ENCODE measurements at regions of chr5 and their contacts with region 1.

Region 1: DNA sequence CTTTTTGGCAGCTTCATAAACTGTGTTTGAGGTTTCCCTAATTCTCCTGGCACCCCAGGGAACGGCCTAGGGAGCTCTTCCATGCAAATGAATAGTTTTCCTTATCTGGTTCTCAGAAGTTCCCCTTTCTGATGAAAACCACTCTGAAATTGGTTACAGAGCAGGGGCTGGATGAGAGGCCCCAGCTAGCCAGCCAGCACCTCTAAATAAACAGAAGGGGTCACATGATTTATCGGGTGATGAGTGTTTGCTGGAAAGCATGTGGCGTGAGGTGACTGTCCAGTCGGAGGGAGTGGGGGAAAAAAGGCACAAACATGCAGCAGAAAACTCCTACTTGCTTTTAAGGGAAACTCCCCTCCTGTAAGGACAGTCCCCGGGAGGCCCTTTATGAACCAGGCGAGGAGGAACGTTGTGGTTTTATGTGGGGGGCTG is 261.2 kb upstream of the ANKRD55 start:
- DNase-seq: no peak
- ATAC-seq: no peak
- H3K4me3 ChIP-seq: no peak overlapping the region
- H3K27ac ChIP-seq: no peak overlapping the region
- H3K4me1 ChIP-seq: no peaks in the 10 kb centered on the region
- CTCF ChIP-seq: no peak
- EP300 ChIP-seq: no peak
- POLR2A ChIP-seq: no peak
- RAD21 ChIP-seq: no peak

Region 2: GRCh38 chr5:56389261-56389660 is 105.1 kb before region 1 on chr5:
- CTCF ChIA-PET with region 1: no interaction called
- POLR2A ChIA-PET with region 1: no interaction called
- DNase-seq: no peak
- ATAC-seq: no peak
- H3K4me3 ChIP-seq: no peak overlapping the region
- H3K27ac ChIP-seq: no peak overlapping the region
- H3K4me1 ChIP-seq: peaks cover 3% of the 10 kb centered on the region; the same call in 1 of the 3 replicates
- CTCF ChIP-seq: no peak
- EP300 ChIP-seq: no peak
- POLR2A ChIP-seq: no peak
- RAD21 ChIP-seq: no peak

Region 3: GRCh38 chr5:56481428-56482357 is 12.6 kb before region 1 on chr5:
- CTCF ChIA-PET with region 1: interaction called, 13 read pairs
- POLR2A ChIA-PET with region 1: no interaction called
- DNase-seq: peak in 1 of 2 experiments; percentile 50
- ATAC-seq: peak; percentile 65 to 71; a peak in 5 of 6 replicates
- H3K4me3 ChIP-seq: peak overlapping the region; percentile 71
- H3K27ac ChIP-seq: peak overlapping the region; percentile 78 to 88
- H3K4me1 ChIP-seq: peaks cover 11% of the 10 kb centered on the region
- CTCF ChIP-seq: peak; percentile 43
- EP300 ChIP-seq: no peak
- POLR2A ChIP-seq: no peak
- RAD21 ChIP-seq: peak in 1 of 2 experiments; percentile 25; a peak in 1 of 5 replicates